ENCODE measurements at regions of chrX and their contacts with region 1.

Region 1: GRCh38 chrX:10189317-10190268 is 32.8 kb downstream of the CLCN4 start:
- DNase-seq: peak; percentile 61 to 76
- ATAC-seq: peak; percentile 86 to 95 (median 88)
- H3K4me3 ChIP-seq: no peak overlapping the region
- H3K27ac ChIP-seq: no peak overlapping the region
- H3K4me1 ChIP-seq: no peaks in the 10 kb centered on the region
- H3K27me3 ChIP-seq: peaks cover 0 to 8% (median 0%) of the 10 kb centered on the region in 3 donors
- CTCF ChIP-seq: peak; percentile 90

Region 2: GRCh38 chrX:9955506-9955905 is 234.1 kb before region 1 on chrX:
- intact Hi-C with region 1: no loop called
- DNase-seq: no peak
- ATAC-seq: no peak
- H3K4me3 ChIP-seq: no peak overlapping the region
- H3K27ac ChIP-seq: no peak overlapping the region
- H3K4me1 ChIP-seq: no peaks in the 10 kb centered on the region
- H3K27me3 ChIP-seq: no peaks in the 10 kb centered on the region
- CTCF ChIP-seq: no peak

Region 3: GRCh38 chrX:10326578-10326977 is 137.0 kb after region 1 on chrX:
- intact Hi-C with region 1: loop called in 1 of 2 experiments (anchors 5 kb)
- DNase-seq: no peak
- ATAC-seq: peak; percentile 28 to 71 (median 53)
- H3K4me3 ChIP-seq: no peak overlapping the region
- H3K27ac ChIP-seq: no peak overlapping the region
- H3K4me1 ChIP-seq: no peaks in the 10 kb centered on the region
- H3K27me3 ChIP-seq: no peaks in the 10 kb centered on the region
- CTCF ChIP-seq: peak; percentile 31

Region 4: DNA sequence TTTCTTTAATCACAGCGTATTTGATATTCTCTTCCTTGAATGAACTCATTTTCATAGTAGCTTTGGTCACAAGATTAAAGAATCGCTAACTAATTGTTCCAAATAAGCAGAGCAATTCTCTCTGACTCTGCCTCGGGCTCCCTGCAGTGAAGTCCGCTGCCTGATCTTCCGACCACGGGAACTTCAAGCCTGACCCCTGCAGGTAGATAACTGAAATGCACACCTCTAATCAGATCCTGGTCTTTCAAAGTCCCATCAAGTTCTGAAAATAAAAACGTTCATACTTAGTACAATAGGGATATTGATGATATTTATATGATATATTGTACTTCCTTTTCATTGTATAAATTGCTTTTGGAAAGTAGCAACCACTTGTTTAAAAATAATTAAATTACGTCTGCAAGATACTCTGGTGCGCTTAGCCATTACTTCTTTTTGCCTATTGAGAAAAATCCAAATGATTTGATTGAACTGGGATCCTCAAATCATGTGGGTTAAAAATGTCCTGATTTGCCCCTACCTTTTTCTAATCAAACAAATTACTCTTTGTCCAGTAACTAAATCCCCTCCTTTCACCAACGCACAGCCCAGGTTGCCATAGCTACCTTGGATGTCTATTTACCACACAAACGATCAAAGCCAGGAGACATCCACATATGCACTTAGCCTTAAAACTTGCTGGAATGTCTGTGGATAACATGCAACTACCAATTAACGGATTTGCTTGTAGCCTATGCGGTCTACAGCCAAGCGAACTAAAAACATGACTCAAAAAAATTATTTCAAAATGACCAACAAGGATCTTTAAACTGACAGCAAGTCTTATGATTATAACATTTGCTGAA is 426.6 kb after region 1 on chrX:
- intact Hi-C with region 1: loop called (anchors 2 to 5 kb)
- DNase-seq: no peak
- ATAC-seq: peak; percentile 47 to 85 (median 62)
- H3K4me3 ChIP-seq: no peak overlapping the region
- H3K27ac ChIP-seq: no peak overlapping the region
- H3K4me1 ChIP-seq: no peaks in the 10 kb centered on the region
- H3K27me3 ChIP-seq: peaks cover 0 to 48% (median 0%) of the 10 kb centered on the region in 3 donors
- CTCF ChIP-seq: peak; percentile 71

Region 5: DNA sequence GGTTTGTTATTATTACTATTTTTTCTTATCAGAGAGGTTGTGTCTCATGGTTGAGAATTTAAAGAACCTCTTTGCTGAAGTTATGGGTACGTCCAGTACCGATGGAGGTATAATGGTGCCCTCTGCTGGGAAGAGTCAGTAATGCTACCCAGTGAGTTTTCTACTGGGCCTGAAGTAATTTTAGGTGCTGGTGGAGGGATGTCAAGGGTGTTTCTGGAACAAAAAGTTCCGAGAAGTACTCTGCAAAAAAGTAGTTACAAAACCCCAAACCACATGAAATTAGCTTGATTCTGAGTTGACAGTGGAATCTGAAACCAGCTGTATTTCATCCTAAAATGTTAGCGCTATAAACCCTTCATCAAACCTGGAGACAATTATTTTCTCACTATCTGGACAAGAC is 533.3 kb after region 1 on chrX:
- intact Hi-C with region 1: loop called (anchors 2 to 10 kb)
- DNase-seq: no peak
- ATAC-seq: peak; percentile 39 to 64 (median 62)
- H3K4me3 ChIP-seq: no peak overlapping the region
- H3K27ac ChIP-seq: no peak overlapping the region
- H3K4me1 ChIP-seq: no peaks in the 10 kb centered on the region
- H3K27me3 ChIP-seq: no peaks in the 10 kb centered on the region
- CTCF ChIP-seq: peak; percentile 69

Region 6: GRCh38 chrX:11137543-11138139 is 948.0 kb after region 1 on chrX:
- intact Hi-C with region 1: loop called in 1 of 2 experiments (anchors 5 kb)
- DNase-seq: no peak
- ATAC-seq: peak in 1 of 4 donors; percentile 29
- H3K4me3 ChIP-seq: no peak overlapping the region
- H3K27ac ChIP-seq: no peak overlapping the region
- H3K4me1 ChIP-seq: no peaks in the 10 kb centered on the region
- H3K27me3 ChIP-seq: peaks cover 0 to 2% (median 0%) of the 10 kb centered on the region in 3 donors
- CTCF ChIP-seq: peak; percentile 75

Measured in psoas muscle (tissue), 8 donors.